CD4-positive, alpha-beta T cell (primary cell): ENCODE measurements at regions of chr9 and their contacts with region 1.

Region 1: GRCh38 chr9:101465392-101465791 is 29.8 kb upstream of the ALDOB start:
- DNase-seq: peak in 3 of 14 experiments; percentile 5 to 12 (median 5)
- ATAC-seq: no peak
- H3K4me3 ChIP-seq: no peak overlapping the region
- H3K4me3 Mint-ChIP-seq: no peak overlapping the region
- H3K27ac ChIP-seq: no peak overlapping the region
- H3K27ac Mint-ChIP-seq: no peak overlapping the region
- H3K4me1 ChIP-seq: no peaks in the 10 kb centered on the region
- H3K4me1 Mint-ChIP-seq: no peaks in the 10 kb centered on the region
- H3K27me3 ChIP-seq: peaks cover 10 to 17% of the 10 kb centered on the region in 2 experiments
- H3K27me3 Mint-ChIP-seq: peaks cover 71% of the 10 kb centered on the region
- CTCF ChIP-seq: no peak

Region 2: GRCh38 chr9:101727612-101728524 is 262.5 kb after region 1 on chr9:
- CTCF ChIA-PET with region 1: no interaction called
- POLR2A ChIA-PET with region 1: no interaction called
- intact Hi-C with region 1: loop called in 1 of 2 experiments (anchors 10 kb)
- DNase-seq: peak in 4 of 14 experiments; percentile 7 to 36 (median 16)
- ATAC-seq: no peak
- H3K4me3 ChIP-seq: no peak overlapping the region
- H3K4me3 Mint-ChIP-seq: no peak overlapping the region
- H3K27ac ChIP-seq: no peak overlapping the region
- H3K27ac Mint-ChIP-seq: no peak overlapping the region
- H3K4me1 ChIP-seq: no peaks in the 10 kb centered on the region
- H3K4me1 Mint-ChIP-seq: no peaks in the 10 kb centered on the region
- H3K27me3 ChIP-seq: peaks cover 0 to 4% of the 10 kb centered on the region in 2 experiments
- H3K27me3 Mint-ChIP-seq: peaks cover 10% of the 10 kb centered on the region
- CTCF ChIP-seq: peak; percentile 47